ENCODE measurements at regions of chr3 and their contacts with region 1.

Region 1: DNA sequence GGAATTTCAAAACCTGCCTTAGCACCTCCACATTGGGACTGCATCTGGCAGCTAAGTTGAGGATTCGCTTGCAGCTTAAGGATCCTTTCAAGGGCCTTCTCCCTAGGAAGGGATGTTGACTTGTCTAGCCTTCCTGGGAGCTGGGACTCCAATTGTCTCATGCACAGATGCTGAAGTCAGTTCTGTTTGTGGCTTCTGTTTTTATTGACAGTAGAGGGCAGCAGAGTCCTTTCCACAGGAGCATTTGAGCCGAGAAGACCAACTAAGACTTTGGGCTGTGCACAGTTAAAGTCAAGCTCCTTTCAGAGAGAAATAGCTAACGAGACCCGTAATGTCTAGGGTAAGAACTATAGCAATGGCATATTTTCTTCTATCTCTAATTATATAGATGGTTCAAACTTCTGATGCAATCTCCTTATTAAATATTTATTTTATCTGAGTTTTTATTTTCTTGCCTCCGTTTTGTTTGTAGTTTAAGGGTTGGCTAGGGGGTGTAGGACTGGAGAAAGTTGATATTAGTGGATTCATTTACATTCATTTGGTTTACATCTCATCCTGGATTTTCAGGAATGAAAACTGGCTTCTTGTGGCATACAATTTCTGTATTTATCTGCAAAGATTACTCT is 59.7 kb upstream of the KBTBD8 start:
- DNase-seq: peak; percentile 29
- CTCF ChIP-seq: peak; percentile 68

Region 2: DNA sequence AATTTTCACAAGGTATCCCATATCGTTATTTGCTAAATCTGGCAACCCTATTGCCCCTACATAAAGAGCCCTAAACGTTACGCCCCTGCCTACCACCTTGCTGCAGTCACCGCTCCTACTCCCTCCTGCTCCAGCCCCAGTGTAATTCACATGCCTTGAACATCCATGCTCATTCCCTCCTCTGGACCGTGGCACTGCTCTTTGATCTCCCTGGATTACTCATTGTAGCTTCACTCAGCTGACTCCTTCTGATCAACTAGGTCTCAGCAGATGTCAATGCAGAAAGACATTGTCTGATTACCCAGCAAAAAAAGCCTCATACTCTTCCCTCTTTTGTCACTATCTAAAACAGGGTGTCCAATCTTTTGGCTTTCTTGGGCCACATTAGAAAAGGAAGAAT is 18.9 kb after region 1 on chr3:
- CTCF ChIA-PET with region 1: interaction called, 21 read pairs
- POLR2A ChIA-PET with region 1: no interaction called
- DNase-seq: no peak
- CTCF ChIP-seq: no peak

Region 3: GRCh38 chr3:66983101-66983500 is 44.6 kb after region 1 on chr3:
- CTCF ChIA-PET with region 1: no interaction called
- POLR2A ChIA-PET with region 1: no interaction called
- DNase-seq: no peak
- CTCF ChIP-seq: no peak

Measured in GM10248 (cell line).